Ovary (tissue), 10 donors: ENCODE measurements at regions of chrX and their contacts with region 1.

Region 1: GRCh38 chrX:139290310-139290709 is 240.2 kb upstream of the F9 start:
- DNase-seq: no peak
- H3K4me3 ChIP-seq: no peak overlapping the region
- H3K27ac ChIP-seq: no peak overlapping the region
- H3K4me1 ChIP-seq: no peaks in the 10 kb centered on the region
- H3K27me3 ChIP-seq: no peaks in the 10 kb centered on the region
- CTCF ChIP-seq: no peak
- EP300 ChIP-seq: no peak
- POLR2A ChIP-seq: no peak

Region 2: DNA sequence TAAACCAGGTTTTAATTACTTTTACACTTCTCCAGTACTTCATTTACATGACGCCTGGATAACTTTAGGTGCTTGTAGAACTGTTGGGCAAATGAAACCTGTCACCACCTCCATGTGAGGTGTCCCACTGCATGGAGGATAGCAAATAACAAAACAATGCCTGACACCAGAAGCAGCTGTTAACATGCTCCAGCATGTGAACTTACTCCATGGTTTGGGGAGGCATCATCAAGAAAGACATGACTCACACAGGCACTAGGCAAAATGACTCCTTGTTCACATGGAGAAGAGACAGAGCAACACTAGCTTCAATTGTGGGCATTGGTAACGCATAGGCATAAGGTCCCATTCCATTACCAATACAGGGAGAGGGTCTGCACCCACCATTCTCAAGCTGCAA is 42.1 kb after region 1 on chrX:
- intact Hi-C with region 1: loop called in 1 of 4 experiments (anchors 5 kb)
- DNase-seq: no peak
- H3K4me3 ChIP-seq: no peak overlapping the region
- H3K27ac ChIP-seq: no peak overlapping the region
- H3K4me1 ChIP-seq: no peaks in the 10 kb centered on the region
- H3K27me3 ChIP-seq: no peaks in the 10 kb centered on the region
- CTCF ChIP-seq: no peak
- EP300 ChIP-seq: no peak
- POLR2A ChIP-seq: no peak